MCF 10A (cell line): ENCODE measurements at regions of chr3 and their contacts with region 1.

Region 1: DNA sequence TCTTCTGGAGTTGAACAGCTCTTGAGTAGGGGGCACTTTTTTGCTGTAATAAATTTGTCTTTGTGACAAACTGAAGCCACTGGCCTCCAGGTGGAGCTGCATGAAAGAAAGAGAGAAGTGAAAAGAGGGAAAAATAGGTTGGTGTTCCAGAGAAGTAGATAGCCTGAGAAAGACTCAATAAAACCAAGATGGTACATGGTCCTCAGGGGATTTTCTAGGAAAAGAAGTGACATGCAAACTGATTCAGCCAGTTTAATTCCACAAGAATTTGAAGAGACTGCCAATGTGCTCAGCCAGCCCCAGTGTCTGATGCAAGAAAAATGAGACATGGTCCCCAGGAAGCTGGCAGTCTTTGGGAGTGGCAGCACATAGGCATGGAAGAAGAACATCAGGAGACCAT is 152.7 kb downstream of the CD47 start:
- DNase-seq: peak; percentile 53
- H3K4me3 Mint-ChIP-seq: no peak overlapping the region
- H3K27ac Mint-ChIP-seq: no peak overlapping the region
- H3K4me1 Mint-ChIP-seq: peaks cover 9% of the 10 kb centered on the region
- H3K27me3 Mint-ChIP-seq: no peaks in the 10 kb centered on the region
- CTCF ChIP-seq: peak; percentile 48

Region 2: DNA sequence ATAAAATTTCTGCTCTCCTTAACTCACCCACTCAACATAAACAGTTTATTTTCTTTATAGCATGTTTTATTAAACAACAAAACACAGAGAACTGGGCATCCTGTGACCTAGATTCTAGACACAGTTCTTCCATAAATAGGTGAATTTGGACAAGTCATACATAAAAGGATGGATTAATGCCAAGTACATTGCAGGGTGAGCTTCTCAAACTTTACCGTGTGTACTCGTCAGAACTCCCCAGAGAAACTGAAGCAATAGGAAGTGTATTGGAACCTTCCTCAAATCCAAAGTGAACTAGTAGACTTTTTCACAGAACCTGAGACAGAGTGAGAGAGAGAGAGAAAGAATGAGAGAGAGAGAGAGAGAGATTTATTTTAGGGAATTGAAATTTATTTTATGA is 13.0 kb after region 1 on chr3:
- CTCF ChIA-PET with region 1: interaction called, 11 read pairs
- POLR2A ChIA-PET with region 1: no interaction called
- intact Hi-C with region 1: no loop called
- DNase-seq: no peak
- H3K4me3 Mint-ChIP-seq: no peak overlapping the region
- H3K27ac Mint-ChIP-seq: no peak overlapping the region
- H3K4me1 Mint-ChIP-seq: peaks cover 6% of the 10 kb centered on the region
- H3K27me3 Mint-ChIP-seq: no peaks in the 10 kb centered on the region
- CTCF ChIP-seq: no peak

Region 3: DNA sequence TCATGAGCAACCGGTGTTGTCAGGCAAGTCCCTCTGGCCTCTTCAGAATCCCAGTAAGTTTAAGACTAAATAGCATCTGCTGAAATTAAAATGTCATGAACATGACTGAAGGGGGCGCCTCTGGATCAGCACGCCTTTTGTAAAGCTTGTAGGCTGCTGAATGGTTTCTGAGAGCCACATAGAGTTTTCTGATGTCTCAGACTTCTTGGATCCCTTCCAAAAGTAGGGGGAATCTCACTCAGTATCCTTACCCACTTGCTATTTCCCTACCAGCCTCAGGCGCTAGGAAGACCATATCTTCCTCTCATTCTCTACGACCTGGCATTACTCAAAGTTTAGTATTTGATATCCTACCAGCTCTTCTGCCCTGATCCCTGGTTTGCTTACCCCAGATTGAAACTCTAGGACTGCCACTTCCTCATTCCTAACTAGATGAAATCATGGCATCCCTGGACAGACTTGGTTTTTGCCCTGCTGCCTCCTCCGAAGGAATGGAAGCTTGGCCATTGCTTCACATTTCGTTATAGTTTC is 215.4 kb after region 1 on chr3:
- CTCF ChIA-PET with region 1: no interaction called
- POLR2A ChIA-PET with region 1: no interaction called
- intact Hi-C with region 1: loop called (anchors 10 kb)
- DNase-seq: peak; percentile 78
- H3K4me3 Mint-ChIP-seq: no peak overlapping the region
- H3K27ac Mint-ChIP-seq: no peak overlapping the region
- H3K4me1 Mint-ChIP-seq: no peaks in the 10 kb centered on the region
- H3K27me3 Mint-ChIP-seq: no peaks in the 10 kb centered on the region
- CTCF ChIP-seq: peak; percentile 39

Region 4: GRCh38 chr3:108406661-108407206 is 468.6 kb after region 1 on chr3:
- CTCF ChIA-PET with region 1: interaction called, 29 read pairs
- POLR2A ChIA-PET with region 1: interaction called, 3 read pairs
- intact Hi-C with region 1: loop called (anchors 1 kb)
- DNase-seq: peak; percentile 59
- H3K4me3 Mint-ChIP-seq: no peak overlapping the region
- H3K27ac Mint-ChIP-seq: no peak overlapping the region
- H3K4me1 Mint-ChIP-seq: peaks cover 5% of the 10 kb centered on the region
- H3K27me3 Mint-ChIP-seq: no peaks in the 10 kb centered on the region
- CTCF ChIP-seq: peak; percentile 38

Region 5: DNA sequence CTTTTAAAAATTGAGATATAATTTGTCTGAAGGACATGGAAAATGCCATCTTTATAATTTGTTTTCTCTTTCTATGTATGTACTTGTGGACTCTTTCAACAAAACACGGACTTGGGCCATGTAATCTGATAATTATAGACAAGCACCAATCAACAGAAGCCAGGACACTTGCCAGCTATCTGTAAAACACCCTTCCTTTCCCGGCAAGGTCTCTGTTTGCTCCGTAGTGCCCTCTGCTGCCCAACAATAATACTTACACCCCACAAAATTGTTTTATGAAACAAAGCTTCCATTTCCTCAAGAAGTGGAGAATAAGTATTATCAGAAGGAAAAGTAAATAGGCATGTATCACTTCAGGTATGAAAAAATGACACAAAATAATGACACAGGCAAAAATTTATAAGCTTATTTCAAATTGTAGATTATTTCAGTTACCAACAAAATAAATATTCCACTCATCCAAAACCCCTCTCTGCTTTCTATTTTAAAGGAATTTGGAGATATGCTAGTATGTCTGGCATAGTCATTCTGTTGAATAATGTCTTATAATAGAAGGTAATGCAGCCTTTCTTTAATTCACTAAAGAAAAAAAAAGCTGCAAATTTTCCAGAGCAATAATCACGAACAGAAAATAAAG is 539.5 kb after region 1 on chr3:
- CTCF ChIA-PET with region 1: interaction called, 12 read pairs
- POLR2A ChIA-PET with region 1: interaction called, 3 read pairs
- intact Hi-C with region 1: loop called (anchors 1 kb)
- DNase-seq: peak; percentile 77
- H3K4me3 Mint-ChIP-seq: no peak overlapping the region
- H3K27ac Mint-ChIP-seq: no peak overlapping the region
- H3K4me1 Mint-ChIP-seq: no peaks in the 10 kb centered on the region
- H3K27me3 Mint-ChIP-seq: no peaks in the 10 kb centered on the region
- CTCF ChIP-seq: peak; percentile 62